ENCODE measurements at regions of chr2 and their contacts with region 1.

Region 1: DNA sequence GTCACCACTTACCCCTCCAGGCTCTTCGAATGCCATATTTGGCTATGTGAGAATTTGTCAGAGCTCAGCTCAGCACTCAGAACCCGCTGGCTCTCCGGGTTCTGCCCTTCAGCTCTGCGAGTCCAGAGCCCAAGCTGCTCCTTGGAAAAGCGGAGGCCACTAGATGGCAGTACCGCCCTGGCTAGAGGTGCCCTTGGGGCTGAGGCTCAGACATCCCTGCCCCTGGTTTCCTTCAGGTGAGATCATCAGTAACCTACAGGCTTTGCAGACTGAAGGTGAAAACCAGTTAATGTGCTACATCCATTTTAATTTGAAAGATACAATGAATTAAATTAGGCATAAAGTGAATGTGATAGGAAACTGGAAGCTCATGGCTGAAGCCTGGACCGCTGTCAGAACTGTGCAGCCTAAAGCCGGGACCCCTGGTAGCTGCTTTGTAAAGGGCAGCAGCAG is 285.6 kb downstream of the AGAP1 start:
- DNase-seq: peak; percentile 50
- H3K4me3 ChIP-seq: no peak overlapping the region
- CTCF ChIP-seq: peak; percentile 96

Region 2: GRCh38 chr2:235709124-235709813 is 70.2 kb before region 1 on chr2:
- in situ Hi-C with region 1: no loop called
- DNase-seq: no peak
- H3K4me3 ChIP-seq: no peak overlapping the region
- CTCF ChIP-seq: no peak

Region 3: DNA sequence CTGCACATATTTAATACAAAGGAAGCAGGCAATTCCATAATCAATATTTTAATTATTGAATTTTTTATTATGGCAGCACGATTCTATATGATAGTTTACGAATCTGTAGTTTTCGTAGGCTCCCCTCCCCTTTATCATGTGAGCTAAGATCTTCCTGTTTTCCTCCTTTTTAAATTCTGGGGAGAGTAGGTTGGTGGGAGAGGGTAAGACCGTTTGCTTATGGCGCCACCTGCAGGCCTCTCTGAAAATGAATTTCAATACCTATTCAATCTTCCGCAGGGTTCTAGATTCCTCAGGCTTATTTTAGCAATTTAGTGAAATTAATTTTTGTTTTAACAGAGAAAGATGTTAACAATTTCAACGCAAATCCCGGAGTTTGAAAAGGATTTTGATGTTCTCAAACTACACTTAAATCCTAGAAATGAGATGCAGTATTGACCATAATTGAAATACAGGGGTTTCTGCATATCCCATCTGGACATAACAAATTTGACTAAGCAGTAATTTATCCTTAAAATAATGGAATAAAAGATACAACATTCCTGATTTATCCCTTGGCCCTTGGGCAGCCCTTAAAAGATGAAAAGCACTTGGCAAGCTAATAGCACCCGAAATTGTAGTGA is 401.5 kb after region 1 on chr2:
- in situ Hi-C with region 1: loop called (anchors 25 kb)
- DNase-seq: no peak
- H3K4me3 ChIP-seq: no peak overlapping the region
- CTCF ChIP-seq: peak; percentile 68

Region 4: DNA sequence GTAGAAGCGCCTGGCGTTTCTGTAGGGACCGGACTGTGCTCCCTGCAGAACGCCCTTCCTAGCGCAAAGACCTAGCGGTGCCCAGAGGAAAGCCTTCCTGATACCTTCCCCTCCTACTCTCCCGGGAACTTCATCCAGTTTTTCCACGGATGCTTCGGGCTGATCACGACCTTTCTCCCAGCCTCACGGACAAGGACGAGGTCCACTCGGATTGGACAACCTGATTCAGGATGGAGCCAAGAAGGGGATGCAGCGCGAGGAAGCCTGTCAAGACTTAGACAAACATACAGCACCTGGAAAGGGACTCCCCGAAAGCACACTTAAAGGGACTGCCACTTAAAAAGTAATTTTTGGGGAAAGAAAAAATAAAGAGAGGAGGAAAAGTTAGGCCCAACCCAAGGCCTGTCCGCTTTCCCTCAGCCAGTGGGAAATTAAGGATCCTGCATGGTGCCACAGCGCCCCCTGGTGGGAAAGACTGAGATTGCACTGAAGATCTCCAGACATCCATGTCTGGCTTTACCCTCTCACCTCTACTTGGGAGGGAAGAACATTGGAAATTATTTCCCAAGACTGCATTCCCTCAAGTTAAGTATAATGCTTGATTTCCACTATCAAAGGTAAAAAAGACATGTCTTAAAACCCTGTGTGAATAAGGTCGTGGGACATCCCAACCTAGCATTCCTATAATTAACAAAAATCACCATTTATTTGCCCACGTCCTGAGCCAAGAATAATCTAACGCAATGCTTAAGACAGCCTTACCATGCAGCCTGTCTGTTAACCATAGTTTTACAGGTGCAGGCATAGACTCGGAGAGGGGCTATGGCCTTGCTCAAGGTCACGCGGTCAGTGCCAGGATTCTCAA is 1292.8 kb after region 1 on chr2:
- in situ Hi-C with region 1: loop called (anchors 25 kb)
- DNase-seq: no peak
- H3K4me3 ChIP-seq: no peak overlapping the region
- CTCF ChIP-seq: peak; percentile 96

Measured in astrocyte of the cerebellum (primary cell).